Dorsolateral prefrontal cortex (tissue), 120 donors: ENCODE measurements at regions of chr12 and their contacts with region 1.

Region 1: DNA sequence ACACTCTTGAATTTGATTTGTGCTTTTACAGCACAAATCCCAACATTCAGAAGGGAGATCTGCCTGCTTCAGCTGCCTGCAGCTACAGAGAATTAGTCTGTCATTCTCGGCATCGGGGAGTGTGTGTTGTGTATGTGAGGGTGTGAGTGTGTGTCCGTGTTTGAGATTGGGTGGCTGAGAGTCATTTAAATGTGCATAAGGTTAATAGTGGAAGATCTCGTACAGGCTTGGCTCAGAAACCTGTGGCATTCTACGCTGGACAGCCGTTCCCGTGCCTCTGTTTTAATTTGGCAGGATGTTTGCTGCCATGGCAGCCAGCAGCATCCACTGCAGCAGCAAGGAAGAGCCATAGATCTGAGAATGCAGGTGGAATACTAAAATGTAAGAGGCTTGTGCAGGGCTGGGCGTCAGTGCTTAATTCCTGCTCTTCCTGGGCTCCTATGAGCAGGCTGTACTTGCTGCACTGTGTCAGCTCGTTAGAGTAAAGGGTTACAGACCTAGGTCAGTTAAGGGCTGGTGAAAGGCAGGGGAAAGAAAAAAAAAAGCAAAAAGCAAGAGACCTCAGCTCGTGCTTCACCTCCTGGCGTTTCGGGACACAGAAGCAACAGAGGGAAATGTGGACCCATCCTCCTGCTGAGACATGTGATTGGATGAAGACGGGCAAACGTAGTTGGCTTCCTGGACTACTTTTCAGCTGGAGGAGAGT is 205.4 kb downstream of the NAV3 start:
- DNase-seq: peak in 5 of 10 donors; percentile 8 to 55 (median 36)
- H3K4me3 ChIP-seq: peak overlapping the region; percentile 21 to 71 (median 51)
- H3K27ac ChIP-seq: peak overlapping the region in 53 of 59 donors; percentile 1 to 83 (median 58)
- H3K27me3 ChIP-seq: no peaks in the 10 kb centered on the region
- CTCF ChIP-seq: peak in 1 of 56 donors; percentile 10

Region 2: DNA sequence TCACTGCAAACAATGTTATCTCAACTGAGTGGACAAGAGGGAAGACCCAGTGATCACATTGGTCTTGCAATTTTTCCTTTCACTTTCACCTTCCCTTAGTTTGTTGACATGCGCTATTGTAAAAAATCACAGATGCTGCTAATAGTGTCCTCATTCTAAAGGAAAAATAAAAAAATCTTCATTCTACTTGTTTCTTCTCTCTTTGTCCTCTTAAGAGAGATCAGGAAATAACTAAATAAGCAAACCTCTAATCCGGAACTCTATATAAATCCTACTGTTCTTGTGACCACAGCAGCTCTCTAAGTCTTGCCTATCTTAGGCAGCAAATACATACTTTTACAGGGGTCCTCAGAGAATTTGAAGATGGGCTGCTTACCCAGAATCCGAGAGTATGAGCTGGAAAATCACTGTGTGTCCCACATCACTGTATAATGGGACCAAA is 52.4 kb after region 1 on chr12:
- intact Hi-C with region 1: loop called in 1 of 2 experiments (anchors 10 kb)
- DNase-seq: no peak
- H3K4me3 ChIP-seq: peak overlapping the region; percentile 1 to 66 (median 48)
- H3K27ac ChIP-seq: peak overlapping the region in 58 of 59 donors; percentile 3 to 92 (median 74)
- H3K27me3 ChIP-seq: no peaks in the 10 kb centered on the region
- CTCF ChIP-seq: peak in 3 of 56 donors; percentile 5 to 20 (median 9)